Prostate gland (tissue), 2 donors: ENCODE measurements at regions of chr3 and their contacts with region 1.

Region 1: DNA sequence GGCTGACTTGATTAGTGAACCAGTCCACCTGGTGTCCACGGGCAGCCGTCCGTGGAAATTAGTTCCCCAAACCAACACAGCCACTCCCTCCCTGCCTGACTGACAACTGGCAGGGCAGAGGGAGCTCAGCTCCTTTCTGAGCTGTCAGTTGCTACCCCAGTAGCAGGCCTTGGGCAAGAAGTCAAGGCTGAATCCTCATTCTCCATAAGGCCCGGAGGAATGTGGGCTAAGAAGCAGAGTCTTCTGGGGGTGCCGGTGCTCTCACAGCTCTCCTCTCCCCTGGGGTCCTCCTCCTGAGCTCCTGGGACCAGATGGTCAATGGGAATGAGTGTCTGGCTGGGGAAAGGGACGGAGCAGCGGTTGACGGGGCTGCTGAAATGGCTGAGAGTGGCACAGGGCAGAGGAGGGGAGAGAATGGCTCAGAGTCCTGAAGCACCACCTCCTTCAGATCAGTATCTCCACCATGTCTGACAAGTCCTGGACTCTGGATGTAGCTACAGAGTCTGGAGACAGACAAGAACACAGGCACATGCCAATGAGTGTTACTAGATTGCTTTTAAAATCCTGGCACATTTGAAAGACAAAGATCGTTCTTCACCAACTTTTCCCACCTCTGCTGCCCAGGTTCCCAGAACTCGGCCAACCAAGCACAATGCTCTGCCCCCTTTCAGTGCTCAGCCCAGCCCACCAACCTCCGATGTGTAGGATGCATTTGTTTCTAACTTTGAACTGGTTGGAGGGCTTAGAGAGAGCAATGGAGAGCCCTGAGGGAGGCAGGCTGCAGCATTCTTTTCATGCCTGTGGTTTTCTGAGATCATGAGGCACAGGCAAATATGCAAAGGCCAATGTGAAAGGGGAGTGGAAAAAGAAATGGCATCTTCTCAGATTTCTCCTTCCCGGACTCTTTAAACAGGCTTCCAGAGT is 16.7 kb downstream of the AMOTL2 start:
- DNase-seq: peak; percentile 53
- H3K4me3 ChIP-seq: no peak overlapping the region
- H3K27ac ChIP-seq: peak overlapping the region; percentile 70 to 74
- H3K4me1 ChIP-seq: peaks cover 16% of the 10 kb centered on the region
- H3K27me3 ChIP-seq: no peaks in the 10 kb centered on the region
- CTCF ChIP-seq: no peak
- POLR2A ChIP-seq: no peak

Region 2: DNA sequence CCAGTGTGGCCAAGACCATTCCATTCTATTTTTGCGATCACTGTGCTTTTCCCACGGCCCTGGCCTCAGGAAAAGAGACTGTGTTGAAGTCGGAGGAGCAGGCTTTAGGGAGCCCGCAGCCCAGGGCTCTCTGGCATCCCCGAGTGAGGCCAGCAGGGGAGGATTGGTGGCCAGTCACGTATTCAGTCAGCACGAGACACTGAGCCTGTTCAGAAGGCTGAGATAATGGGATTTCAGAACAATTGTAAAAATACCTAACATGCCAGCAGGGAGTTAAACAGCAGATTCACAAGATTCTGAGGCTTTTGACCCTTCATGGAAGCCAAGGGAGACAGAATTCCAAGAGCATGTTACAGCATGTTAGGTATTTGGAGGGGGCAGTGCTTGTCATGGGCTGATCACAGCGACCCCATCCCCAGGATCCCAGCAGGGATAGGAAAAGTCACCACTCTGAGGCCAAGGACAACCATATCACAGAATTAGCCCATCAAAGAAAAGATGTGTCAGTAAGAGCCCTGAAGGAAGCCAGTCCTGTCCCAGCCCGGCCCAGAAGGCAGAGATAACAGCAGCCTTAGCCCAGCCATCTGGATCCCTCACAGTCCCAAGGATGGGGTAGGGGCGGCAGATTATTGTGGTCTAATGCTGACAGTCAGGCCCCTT is 23.9 kb before region 1 on chr3:
- intact Hi-C with region 1: loop called (anchors 2 kb)
- DNase-seq: no peak
- H3K4me3 ChIP-seq: no peak overlapping the region
- H3K27ac ChIP-seq: peak overlapping the region; percentile 64 to 68
- H3K4me1 ChIP-seq: no peaks in the 10 kb centered on the region
- H3K27me3 ChIP-seq: no peaks in the 10 kb centered on the region
- CTCF ChIP-seq: no peak
- POLR2A ChIP-seq: no peak

Region 3: DNA sequence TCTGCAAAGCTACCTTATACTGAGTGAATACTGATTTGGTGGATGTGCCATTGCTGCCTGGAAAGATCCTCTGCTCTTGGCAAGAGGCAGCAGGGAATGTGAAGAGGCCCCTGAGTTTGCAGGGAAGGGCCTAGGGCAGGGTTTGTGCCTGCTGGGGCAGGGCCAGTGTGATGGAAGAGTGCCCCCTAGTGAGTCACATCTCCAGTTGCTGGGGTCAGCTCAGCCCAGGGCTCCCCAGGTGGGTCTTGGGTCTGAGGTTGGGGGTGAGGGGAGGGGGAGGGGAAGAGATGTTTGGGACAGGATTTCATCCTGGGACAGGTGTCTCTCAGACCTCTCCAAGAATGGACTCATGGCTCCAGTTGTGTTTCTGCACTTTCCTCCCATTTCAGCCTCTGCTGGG is 20.9 kb after region 1 on chr3:
- intact Hi-C with region 1: no loop called
- DNase-seq: no peak
- H3K4me3 ChIP-seq: no peak overlapping the region
- H3K27ac ChIP-seq: no peak overlapping the region
- H3K4me1 ChIP-seq: peaks cover 17% of the 10 kb centered on the region
- H3K27me3 ChIP-seq: no peaks in the 10 kb centered on the region
- CTCF ChIP-seq: peak in 3 of 4 experiments; percentile 16 to 49 (median 47)
- POLR2A ChIP-seq: no peak